Left ventricle myocardium superior (tissue), 1 donor: ENCODE measurements at regions of chr17 and their contacts with region 1.

Region 1: GRCh38 chr17:55295411-55296170 is 30.8 kb downstream of the HLF start:
- DNase-seq: peak; percentile 52
- ATAC-seq: peak; percentile 93

Region 2: GRCh38 chr17:55242476-55242875 is 53.1 kb before region 1 on chr17:
- intact Hi-C with region 1: loop called (anchors 10 kb)
- DNase-seq: no peak
- ATAC-seq: no peak

Region 3: GRCh38 chr17:55513885-55514591 is 218.4 kb after region 1 on chr17:
- intact Hi-C with region 1: no loop called
- DNase-seq: peak; percentile 67
- ATAC-seq: peak; percentile 67